AG04450 (cell line): ENCODE measurements at regions of chr1 and their contacts with region 1.

Region 1: DNA sequence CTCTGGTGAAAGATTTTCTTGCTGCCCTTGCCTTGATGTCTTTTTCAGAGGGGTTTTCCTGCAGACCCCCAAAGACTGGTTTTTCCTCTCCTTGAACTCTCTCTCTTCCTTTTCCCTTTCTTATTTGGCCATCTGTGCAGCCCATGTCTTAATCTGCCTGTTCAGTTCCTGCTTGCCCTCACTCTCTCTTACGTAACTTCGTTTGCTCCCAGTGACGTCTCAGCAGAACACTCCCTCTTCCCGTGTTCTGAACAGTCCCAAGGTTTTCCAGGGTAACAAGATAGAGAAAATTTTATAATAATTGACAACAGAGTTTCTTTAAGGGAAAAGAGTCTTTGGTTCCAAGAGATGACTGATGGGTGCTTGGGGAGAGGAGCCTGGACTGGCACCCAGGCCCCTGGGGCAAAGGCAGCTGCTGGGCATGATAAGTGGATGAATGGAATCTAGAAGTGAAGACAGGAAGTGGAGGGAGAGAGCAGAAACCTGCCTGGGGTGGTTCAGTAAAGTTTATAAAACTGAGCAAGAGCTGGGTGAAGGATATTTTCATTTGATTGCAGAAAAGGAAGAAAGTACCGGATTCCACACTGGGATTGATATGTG is 109.0 kb upstream of the LMO4 start:
- DNase-seq: no peak
- H3K4me3 ChIP-seq: no peak overlapping the region
- H3K27ac ChIP-seq: no peak overlapping the region
- H3K27me3 ChIP-seq: no peaks in the 10 kb centered on the region
- CTCF ChIP-seq: no peak

Region 2: GRCh38 chr1:87074001-87074795 is 145.5 kb before region 1 on chr1:
- CTCF ChIA-PET with region 1: interaction called, 11 read pairs
- POLR2A ChIA-PET with region 1: no interaction called
- DNase-seq: no peak
- H3K4me3 ChIP-seq: no peak overlapping the region
- H3K27ac ChIP-seq: no peak overlapping the region
- H3K27me3 ChIP-seq: no peaks in the 10 kb centered on the region
- CTCF ChIP-seq: no peak

Region 3: DNA sequence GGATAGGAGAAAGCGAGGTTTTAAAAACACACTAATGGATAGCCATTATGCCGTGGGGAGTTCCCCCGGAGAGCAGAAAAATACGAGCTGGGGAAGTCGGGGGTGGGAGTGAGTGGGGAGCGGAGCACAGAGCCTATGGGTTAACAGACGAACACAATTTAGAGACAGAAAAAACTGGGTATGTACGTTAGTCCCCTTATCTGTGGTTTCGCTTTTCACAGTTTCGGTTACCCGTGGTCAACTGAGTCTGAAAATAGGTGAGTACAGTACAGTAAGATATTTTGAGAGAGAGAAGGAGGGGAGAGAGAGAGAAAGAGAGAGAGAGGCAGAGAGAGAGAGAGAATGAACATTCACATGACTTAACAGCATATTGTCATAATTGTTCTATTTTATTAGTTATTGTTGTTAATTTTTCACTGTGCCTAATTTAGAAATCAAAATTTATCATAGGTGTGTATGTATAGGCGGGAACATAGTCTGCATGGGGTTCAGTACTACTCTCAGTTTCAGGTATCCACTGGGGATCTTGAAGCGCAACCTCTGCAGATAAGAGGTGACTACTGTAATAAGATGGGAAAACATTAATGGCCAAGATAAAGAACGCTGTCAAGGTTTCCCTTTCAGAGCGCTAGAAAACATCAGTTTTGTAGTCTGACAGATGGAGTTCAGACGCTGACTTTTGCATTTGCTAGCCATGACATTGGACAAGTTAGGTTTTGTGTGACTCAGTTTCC is 16.6 kb before region 1 on chr1:
- CTCF ChIA-PET with region 1: no interaction called
- POLR2A ChIA-PET with region 1: no interaction called
- DNase-seq: no peak
- H3K4me3 ChIP-seq: no peak overlapping the region
- H3K27ac ChIP-seq: no peak overlapping the region
- H3K27me3 ChIP-seq: no peaks in the 10 kb centered on the region
- CTCF ChIP-seq: no peak